ENCODE measurements at regions of chr11 and their contacts with region 1.

Region 1: GRCh38 chr11:447923-448731 is 2.0 kb upstream of the PTDSS2 start:
- DNase-seq: peak; percentile 9
- H3K4me3 ChIP-seq: peak overlapping the region; percentile 76
- CTCF ChIP-seq: peak; percentile 82

Region 2: GRCh38 chr11:236774-237767 is 211.1 kb before region 1 on chr11 and contains the start of gene PSMD13:
- CTCF ChIA-PET with region 1: interaction called, 12 read pairs
- POLR2A ChIA-PET with region 1: no interaction called
- DNase-seq: no peak
- H3K4me3 ChIP-seq: peak within 1 kb of the TSS; percentile 91
- CTCF ChIP-seq: no peak

Region 3: GRCh38 chr11:313787-314547 is 134.2 kb before region 1 on chr11 and contains the start of gene IFITM1:
- CTCF ChIA-PET with region 1: interaction called, 13 read pairs
- POLR2A ChIA-PET with region 1: no interaction called
- DNase-seq: peak; percentile 31
- H3K4me3 ChIP-seq: peak within 1 kb of the TSS; percentile 64
- CTCF ChIP-seq: no peak

Region 4: DNA sequence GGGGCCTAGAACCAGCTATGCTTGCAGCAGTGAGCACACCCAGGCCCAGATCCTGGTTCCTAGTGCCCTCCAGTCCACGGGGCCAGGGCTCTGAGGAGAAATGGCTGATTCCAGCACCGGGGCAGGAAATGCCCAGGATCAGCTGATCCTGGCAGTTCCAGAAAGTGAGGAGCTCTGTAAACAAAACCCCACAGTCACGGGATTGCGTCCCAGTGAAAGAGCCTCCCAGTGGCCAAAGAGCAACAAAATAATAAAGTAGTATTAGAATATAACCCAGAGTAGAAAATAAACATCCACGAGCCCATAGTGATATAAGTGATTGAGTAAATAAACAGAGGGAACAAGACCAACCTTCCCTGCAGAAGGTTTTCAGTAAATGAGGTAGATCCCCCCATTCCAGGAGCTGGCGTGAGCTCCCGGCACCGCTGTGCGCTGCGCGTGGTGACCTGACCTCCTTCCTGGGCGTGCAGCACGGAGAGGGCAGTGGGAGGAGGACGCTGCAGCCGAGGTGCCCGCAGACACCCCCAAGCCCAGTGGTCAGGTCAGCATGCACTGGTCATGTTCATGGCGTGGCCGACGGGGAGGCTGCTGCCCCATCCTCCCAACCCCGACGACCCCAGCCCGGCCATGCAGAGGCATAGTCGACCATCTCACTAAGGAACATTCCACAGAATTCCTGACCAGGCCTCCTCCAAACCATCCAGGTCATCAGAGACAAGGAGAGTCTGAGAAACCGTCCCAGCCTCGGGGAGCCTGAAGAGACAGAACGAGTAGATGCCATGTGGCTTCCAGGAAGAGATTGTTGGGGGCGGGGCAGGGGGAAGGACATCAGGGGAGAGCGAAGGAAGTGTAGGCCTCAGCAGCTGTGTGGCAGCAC is 21.8 kb after region 1 on chr11:
- CTCF ChIA-PET with region 1: interaction called, 24 read pairs
- POLR2A ChIA-PET with region 1: no interaction called
- DNase-seq: peak; percentile 37
- H3K4me3 ChIP-seq: peak overlapping the region; percentile 30
- CTCF ChIP-seq: peak; percentile 5

Measured in AG04449 (cell line).